Sigmoid colon (tissue), 7 donors: ENCODE measurements at regions of chr22 and their contacts with region 1.

Region 1: DNA sequence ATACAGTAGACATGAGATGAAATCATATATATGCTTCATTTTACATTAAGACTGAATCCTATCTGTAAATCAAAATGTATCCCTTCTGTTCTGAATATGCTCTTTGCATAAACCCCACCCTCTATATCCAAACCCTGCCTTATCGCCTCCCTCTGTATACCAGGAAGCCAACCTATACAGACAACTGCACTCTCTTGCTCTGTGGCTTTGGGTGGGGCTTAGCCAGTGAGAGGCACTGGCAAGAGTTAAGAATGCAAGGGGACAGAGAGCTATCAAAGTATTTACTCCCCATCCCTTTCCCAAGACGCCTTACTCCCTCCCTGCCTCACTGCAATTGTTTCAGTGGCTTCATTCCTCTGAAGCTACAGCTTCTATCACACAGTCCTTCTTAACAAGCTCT is 309.8 kb downstream of the TTC28 start:
- DNase-seq: no peak
- H3K4me3 ChIP-seq: no peak overlapping the region
- H3K27ac ChIP-seq: no peak overlapping the region
- H3K4me1 ChIP-seq: peaks cover 0 to 17% (median 8%) of the 10 kb centered on the region in 4 donors
- H3K27me3 ChIP-seq: no peaks in the 10 kb centered on the region
- CTCF ChIP-seq: no peak
- EP300 ChIP-seq: no peak
- POLR2A ChIP-seq: no peak

Region 2: DNA sequence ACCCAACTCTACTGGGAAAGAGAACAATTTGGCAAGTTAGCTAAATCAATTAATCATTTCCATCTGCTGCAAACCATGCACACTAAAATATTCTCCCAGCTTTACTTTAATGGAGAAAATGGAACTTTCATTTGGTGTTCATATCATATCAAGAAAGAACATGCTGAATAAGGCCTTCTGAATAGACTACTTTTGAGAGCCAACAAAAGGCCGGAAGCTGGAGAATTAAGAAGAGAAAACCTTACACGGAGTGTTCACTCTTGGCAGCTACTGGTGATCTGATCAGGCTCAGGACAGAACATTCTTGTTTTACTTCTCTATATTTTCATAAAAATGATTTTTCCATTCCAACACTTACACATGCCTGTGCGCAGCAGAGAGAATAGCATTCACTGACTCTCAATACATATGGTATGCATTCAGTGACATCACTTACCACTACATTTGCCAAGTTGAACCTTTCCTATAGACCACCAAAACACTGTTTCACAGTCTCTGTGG is 144.5 kb after region 1 on chr22:
- intact Hi-C with region 1: loop called (anchors 10 kb)
- DNase-seq: no peak
- H3K4me3 ChIP-seq: no peak overlapping the region
- H3K27ac ChIP-seq: no peak overlapping the region
- H3K4me1 ChIP-seq: no peaks in the 10 kb centered on the region
- H3K27me3 ChIP-seq: no peaks in the 10 kb centered on the region
- CTCF ChIP-seq: no peak
- EP300 ChIP-seq: no peak
- POLR2A ChIP-seq: no peak